ENCODE measurements at regions of chr11 and their contacts with region 1.

Region 1: DNA sequence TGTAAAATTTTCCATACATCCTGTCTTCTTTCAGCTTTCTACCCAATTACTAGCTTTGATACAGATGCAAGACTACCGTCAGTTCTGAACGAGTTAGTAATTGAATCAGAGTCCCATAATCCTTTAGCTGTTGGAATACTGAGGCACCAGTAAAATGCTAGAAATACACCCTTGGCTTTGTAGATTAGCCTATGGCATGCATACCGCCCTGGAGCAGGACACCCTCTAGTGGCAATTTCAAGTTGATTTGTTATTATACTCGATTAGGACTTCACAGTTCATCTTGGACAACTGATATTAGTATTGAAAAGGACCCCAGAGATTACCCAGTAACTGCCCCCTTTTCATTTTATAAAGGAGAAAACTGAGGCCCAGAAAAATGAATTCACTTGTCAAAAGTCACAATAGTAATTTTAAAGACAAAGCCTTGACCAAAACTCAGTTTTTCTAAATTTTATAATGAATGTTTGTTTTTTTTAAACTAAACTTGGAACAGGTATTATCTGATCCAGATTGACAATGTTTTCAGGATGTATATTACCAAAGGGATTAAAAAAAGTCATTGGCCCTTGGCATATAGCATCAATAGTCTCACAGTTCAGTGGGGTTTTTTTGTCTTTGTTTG is 72.6 kb downstream of the HIPK3 start:
- DNase-seq: no peak
- H3K4me3 ChIP-seq: no peak overlapping the region
- H3K27ac ChIP-seq: peak overlapping the region; percentile 31
- H3K4me1 ChIP-seq: peaks cover 99% of the 10 kb centered on the region
- H3K27me3 ChIP-seq: no peaks in the 10 kb centered on the region
- CTCF ChIP-seq: peak; percentile 74

Region 2: DNA sequence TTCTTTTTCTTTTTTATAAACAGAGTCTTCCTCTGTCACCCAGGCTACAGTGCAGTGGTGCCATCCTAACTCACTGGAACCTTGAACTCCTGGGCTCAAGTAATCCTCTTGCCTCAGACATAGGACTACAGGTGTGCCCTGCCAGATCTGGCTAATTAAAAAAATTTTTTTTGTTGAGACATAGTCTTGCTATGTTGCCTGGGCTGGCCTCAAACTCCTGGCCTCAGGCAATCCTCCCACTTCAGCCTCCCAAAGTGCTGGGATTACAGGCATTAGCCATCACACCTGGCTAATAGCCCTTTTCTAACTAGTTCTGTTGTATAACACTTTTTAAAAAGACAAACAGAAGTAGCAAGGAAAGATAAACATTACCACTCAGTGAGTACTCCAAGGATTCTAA is 226.0 kb before region 1 on chr11:
- intact Hi-C with region 1: no loop called
- DNase-seq: no peak
- H3K4me3 ChIP-seq: no peak overlapping the region
- H3K27ac ChIP-seq: no peak overlapping the region
- H3K4me1 ChIP-seq: no peaks in the 10 kb centered on the region
- H3K27me3 ChIP-seq: no peaks in the 10 kb centered on the region
- CTCF ChIP-seq: no peak

Region 3: GRCh38 chr11:33168709-33169200 is 161.1 kb before region 1 on chr11:
- intact Hi-C with region 1: loop called (anchors 5 kb)
- DNase-seq: no peak
- H3K4me3 ChIP-seq: no peak overlapping the region
- H3K27ac ChIP-seq: peak overlapping the region; percentile 35
- H3K4me1 ChIP-seq: peaks cover 20% of the 10 kb centered on the region
- H3K27me3 ChIP-seq: no peaks in the 10 kb centered on the region
- CTCF ChIP-seq: no peak

Region 4: DNA sequence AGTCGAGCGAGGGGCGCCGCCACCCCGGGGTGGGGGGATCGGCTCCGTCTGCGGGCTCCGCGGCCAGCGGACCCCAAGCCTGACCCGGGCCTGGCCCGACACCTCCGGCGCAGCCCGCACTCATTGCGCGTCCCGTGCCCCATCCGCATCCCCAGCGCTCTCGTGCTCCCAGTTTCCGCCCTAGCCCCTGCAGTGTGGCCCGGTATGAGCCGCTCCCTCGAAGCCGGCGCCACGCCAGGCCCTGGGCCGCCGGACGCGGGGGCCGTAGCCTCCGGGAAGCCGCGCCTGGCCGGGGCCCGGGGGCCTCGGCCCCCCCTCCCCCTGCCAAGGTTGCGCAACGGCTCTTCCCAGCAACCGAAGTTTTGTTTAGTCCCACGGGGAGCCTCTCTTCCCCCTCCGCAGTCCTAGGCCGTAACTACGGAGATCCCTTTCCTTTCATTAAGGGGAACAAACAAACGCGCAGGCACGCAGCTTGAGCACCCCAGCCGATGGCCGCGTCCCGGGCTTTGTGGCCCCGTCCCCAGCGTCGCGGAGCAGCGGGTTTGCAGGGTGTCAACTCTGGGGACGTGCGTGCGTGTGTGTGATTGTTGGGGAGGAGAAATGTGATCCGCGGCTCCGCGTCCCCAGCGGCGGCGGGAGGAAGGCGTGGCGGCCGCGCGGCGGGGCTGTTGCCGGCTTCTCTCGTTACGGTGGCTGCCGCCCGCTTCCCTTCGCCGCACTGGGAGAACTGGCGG is 71.8 kb before region 1 on chr11:
- intact Hi-C with region 1: loop called (anchors 5 kb)
- DNase-seq: peak; percentile 91
- H3K4me3 ChIP-seq: peak overlapping the region; percentile 98
- H3K27ac ChIP-seq: peak overlapping the region; percentile 100
- H3K4me1 ChIP-seq: peaks cover 64% of the 10 kb centered on the region
- H3K27me3 ChIP-seq: no peaks in the 10 kb centered on the region
- CTCF ChIP-seq: peak; percentile 62

Region 5: DNA sequence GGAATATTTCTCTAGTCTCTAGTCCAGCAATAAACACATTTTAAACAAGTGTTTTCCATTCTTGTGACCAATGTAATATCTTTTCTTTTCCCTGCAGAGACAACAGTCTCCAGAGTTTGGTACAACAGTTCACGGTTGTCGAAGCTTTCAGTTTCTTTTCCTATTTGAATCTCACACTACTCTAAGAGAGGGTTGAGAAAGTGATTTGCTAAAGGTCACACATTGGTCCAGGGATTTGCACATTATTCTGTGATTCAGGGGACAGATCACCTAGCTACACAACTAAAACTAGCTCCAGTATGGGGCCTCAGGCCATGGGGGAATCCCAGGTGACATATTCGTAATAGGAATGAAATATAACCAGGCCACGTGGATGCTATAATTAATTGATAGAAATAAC is 59.8 kb after region 1 on chr11:
- intact Hi-C with region 1: no loop called
- DNase-seq: no peak
- H3K4me3 ChIP-seq: no peak overlapping the region
- H3K27ac ChIP-seq: no peak overlapping the region
- H3K4me1 ChIP-seq: no peaks in the 10 kb centered on the region
- H3K27me3 ChIP-seq: peaks cover 13% of the 10 kb centered on the region
- CTCF ChIP-seq: no peak